ENCODE measurements at regions of chr17 and their contacts with region 1.

Region 1: DNA sequence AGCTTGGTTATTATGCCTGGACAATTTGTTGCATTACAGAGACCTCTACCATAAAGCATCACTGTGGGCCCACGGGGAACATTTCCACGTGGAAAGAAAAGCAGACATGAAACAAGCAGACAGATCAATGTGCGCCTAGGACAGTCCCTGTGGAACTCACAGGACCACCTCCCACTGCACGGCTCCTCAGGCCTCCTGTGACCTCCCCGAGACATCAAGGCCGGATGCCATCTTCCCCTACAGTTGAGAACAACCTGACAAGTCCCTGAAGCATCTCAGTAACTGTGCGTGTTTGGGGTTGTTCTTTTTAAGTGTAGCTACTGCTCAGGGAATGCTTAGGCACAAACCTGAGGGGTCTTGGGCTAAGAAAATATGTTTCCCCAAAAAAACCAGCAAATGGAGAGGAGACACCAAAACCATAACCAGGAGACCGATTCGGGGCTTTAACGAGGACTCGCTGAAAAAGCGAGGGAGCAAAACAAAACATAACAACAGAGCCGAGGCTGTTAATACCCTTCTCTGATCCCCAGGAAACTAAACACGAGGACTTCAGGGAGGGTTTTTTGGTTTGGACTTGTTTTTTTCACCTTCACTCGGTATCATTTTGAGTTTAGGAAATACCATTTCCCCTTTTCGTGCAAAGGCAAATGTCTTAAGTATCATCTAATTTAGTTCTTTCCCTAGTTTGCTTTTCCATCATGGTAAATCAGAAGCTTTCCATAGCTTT is 87.1 kb downstream of the CYTH1 start:
- DNase-seq: no peak

Region 2: DNA sequence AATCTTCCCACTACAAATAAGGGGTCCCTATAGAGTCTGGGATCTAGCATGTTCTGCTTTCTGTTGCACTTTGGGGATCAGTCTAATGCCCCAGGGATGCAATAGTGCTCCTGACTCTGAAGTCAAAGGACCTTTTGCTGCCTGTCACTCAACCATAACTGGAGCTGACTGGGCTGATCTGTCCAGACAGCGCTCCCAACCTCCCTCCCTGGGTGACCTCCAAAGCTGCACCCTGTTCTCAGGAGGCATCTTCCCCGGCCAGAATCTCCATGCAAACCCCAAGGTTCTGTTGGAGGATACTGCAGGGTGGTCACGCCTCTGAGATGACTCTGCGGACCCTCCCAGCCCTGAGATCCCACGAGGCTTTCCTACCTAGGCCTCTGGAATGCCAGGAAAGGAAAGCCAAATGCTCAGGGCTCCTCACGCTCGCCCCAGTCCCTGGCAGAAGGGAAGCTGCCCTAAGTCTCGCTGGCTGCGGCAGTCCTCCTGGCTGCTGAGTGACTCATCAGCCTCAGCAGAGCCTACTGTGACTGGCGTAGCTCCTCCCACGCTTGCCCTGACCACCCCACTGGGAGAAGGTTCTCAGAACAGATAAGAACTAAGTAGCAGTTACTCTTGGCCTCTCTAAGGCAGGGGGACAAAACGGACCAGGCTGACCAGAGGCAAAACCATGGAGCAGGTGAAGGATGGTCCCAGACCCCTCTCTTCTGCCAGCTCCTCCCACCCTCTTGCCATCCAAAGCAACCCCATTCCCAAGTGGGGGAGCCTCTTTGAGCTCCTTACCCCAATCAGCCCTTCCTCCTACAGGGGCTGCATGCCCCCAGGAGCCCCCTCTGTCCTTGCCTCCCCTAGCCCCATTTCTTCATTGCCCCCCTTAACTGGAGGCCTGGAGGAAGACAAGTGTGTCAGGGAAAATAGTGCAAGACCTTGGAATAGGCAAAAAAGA is 860.5 kb before region 1 on chr17:
- intact Hi-C with region 1: loop called in 1 of 2 experiments (anchors 5 kb)
- DNase-seq: peak; percentile 92

Region 3: GRCh38 chr17:78278139-78279127 is 416.5 kb before region 1 on chr17:
- intact Hi-C with region 1: no loop called
- DNase-seq: no peak

Measured in posterior vena cava (tissue), 2 donors.